ENCODE measurements at regions of chr5 and their contacts with region 1.

Region 1: DNA sequence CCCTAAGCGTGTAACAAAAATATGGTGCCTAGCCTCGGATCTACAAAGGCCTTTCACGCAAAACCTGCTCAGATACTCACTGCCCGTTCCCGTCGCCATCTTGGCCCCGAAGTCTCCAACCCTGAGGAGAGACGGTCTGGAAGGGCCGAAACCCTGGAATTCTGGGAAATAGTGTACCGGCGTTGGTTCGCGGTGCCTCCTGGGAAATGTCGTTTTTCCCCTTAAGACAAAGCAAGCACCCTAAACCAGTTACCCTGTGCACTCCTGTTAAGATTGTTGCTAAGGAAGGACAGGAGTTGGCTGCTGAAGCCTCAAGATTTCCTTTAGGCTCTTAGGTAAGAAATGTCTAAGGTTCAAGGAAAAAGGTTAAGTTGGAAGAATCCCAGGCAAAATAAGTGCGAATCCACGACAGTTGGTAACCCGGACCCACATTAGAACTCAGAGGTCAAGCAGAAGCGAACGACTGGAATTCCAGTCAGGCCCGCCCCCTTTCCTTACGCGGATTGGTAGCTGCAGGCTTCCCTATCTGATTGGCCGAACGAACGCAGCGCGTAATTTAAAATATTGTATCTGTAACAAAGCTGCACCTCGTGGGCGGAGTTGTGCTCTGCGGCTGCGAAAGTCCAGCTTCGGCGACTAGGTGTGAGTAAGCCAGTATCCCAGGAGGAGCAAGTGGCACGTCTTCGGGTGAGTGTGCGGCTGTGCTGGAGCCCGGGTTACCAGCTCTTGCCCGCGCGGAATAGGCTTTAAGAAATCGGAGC is at the starts of genes BRD8 and KIF20A:
- DNase-seq: peak; percentile 92
- ATAC-seq: peak; percentile 92
- H3K4me3 ChIP-seq: peak within 1 kb of the TSS; percentile 97
- H3K27ac ChIP-seq: peak within 1 kb of the TSS; percentile 97
- H3K4me1 ChIP-seq: no peaks in the 10 kb centered on the region; the same call in 1 of the 2 replicates
- H3K27me3 ChIP-seq: no peaks in the 10 kb centered on the region
- CTCF ChIP-seq: no peak
- EP300 ChIP-seq: peak in 1 of 2 experiments; percentile 13; a peak in 2 of 4 replicates
- POLR2A ChIP-seq: peak; percentile 73
- RAD21 ChIP-seq: no peak
- polyA plus RNA-seq, gene BRD8: 35.2 to 52.6 TPM
- polyA plus RNA-seq, gene KIF20A: 20.7 to 27.2 TPM

Region 2: GRCh38 chr5:138213161-138214029 is 34.7 kb after region 1 on chr5 and contains the start of gene CDC23:
- CTCF ChIA-PET with region 1: interaction called, 3 read pairs
- POLR2A ChIA-PET with region 1: interaction called, 9 read pairs
- RAD21 ChIA-PET with region 1: interaction called, 12 read pairs
- SMC1A ChIA-PET with region 1: interaction called, 5 read pairs
- in situ Hi-C with region 1: no loop called
- intact Hi-C with region 1: no loop called
- DNase-seq: peak; percentile 94
- ATAC-seq: peak; percentile 99
- H3K4me3 ChIP-seq: peak within 1 kb of the TSS; percentile 92
- H3K27ac ChIP-seq: peak within 1 kb of the TSS; percentile 66
- H3K4me1 ChIP-seq: no peaks in the 10 kb centered on the region; the same call in 1 of the 2 replicates
- H3K27me3 ChIP-seq: no peaks in the 10 kb centered on the region
- CTCF ChIP-seq: no peak
- EP300 ChIP-seq: no peak
- POLR2A ChIP-seq: peak; percentile 93
- RAD21 ChIP-seq: no peak
- polyA plus RNA-seq, gene CDC23: 45.7 to 61.7 TPM

Region 3: GRCh38 chr5:138337685-138338410 is 159.2 kb after region 1 on chr5 and contains the start of gene FAM53C:
- CTCF ChIA-PET with region 1: no interaction called
- POLR2A ChIA-PET with region 1: interaction called, 6 read pairs
- RAD21 ChIA-PET with region 1: no interaction called
- SMC1A ChIA-PET with region 1: interaction called, 7 read pairs
- in situ Hi-C with region 1: no loop called
- intact Hi-C with region 1: loop called (anchors 5 kb)
- DNase-seq: peak; percentile 79
- ATAC-seq: peak; percentile 94
- H3K4me3 ChIP-seq: peak within 1 kb of the TSS; percentile 90
- H3K27ac ChIP-seq: peak within 1 kb of the TSS; percentile 96
- H3K4me1 ChIP-seq: no peaks in the 10 kb centered on the region
- H3K27me3 ChIP-seq: no peaks in the 10 kb centered on the region
- CTCF ChIP-seq: no peak
- EP300 ChIP-seq: peak; percentile 3 to 58; a peak in 1 of 4 replicates
- POLR2A ChIP-seq: peak; percentile 100
- RAD21 ChIP-seq: no peak
- polyA plus RNA-seq, gene FAM53C: 8.0 to 8.8 TPM

Region 4: GRCh38 chr5:138408023-138408422 is 229.3 kb after region 1 on chr5:
- CTCF ChIA-PET with region 1: interaction called, 4 read pairs
- POLR2A ChIA-PET with region 1: no interaction called
- RAD21 ChIA-PET with region 1: interaction called, 3 read pairs
- SMC1A ChIA-PET with region 1: interaction called, 3 read pairs
- in situ Hi-C with region 1: loop called (anchors 10 kb)
- intact Hi-C with region 1: loop called (anchors 1 kb)
- DNase-seq: peak; percentile 42
- ATAC-seq: peak; percentile 97
- H3K4me3 ChIP-seq: no peak overlapping the region
- H3K27ac ChIP-seq: peak overlapping the region; percentile 52
- H3K4me1 ChIP-seq: peaks cover 6% of the 10 kb centered on the region; the same call in 1 of the 2 replicates
- H3K27me3 ChIP-seq: no peaks in the 10 kb centered on the region
- CTCF ChIP-seq: no peak; a peak in 1 of 6 replicates
- EP300 ChIP-seq: no peak
- POLR2A ChIP-seq: no peak
- RAD21 ChIP-seq: no peak

Region 5: GRCh38 chr5:138449501-138450239 is 271.0 kb after region 1 on chr5:
- CTCF ChIA-PET with region 1: interaction called, 5 read pairs
- POLR2A ChIA-PET with region 1: no interaction called
- RAD21 ChIA-PET with region 1: interaction called, 4 read pairs
- SMC1A ChIA-PET with region 1: no interaction called
- in situ Hi-C with region 1: no loop called
- intact Hi-C with region 1: loop called (anchors 1 kb)
- DNase-seq: no peak
- ATAC-seq: peak; percentile 97
- H3K4me3 ChIP-seq: no peak overlapping the region
- H3K27ac ChIP-seq: no peak overlapping the region
- H3K4me1 ChIP-seq: peaks cover 4% of the 10 kb centered on the region; the same call in 1 of the 2 replicates
- H3K27me3 ChIP-seq: no peaks in the 10 kb centered on the region
- CTCF ChIP-seq: peak; percentile 91 to 96 (median 93)
- EP300 ChIP-seq: no peak
- POLR2A ChIP-seq: no peak
- RAD21 ChIP-seq: peak; percentile 63

Region 6: GRCh38 chr5:138542956-138543729 is 364.4 kb after region 1 on chr5 and contains the start of gene ETF1:
- CTCF ChIA-PET with region 1: interaction called, 3 read pairs
- POLR2A ChIA-PET with region 1: interaction called, 6 read pairs
- RAD21 ChIA-PET with region 1: interaction called, 4 read pairs
- SMC1A ChIA-PET with region 1: interaction called, 6 read pairs
- in situ Hi-C with region 1: no loop called
- intact Hi-C with region 1: loop called (anchors 1 kb)
- DNase-seq: peak; percentile 97
- ATAC-seq: peak; percentile 92
- H3K4me3 ChIP-seq: peak within 1 kb of the TSS; percentile 99
- H3K27ac ChIP-seq: peak within 1 kb of the TSS; percentile 100
- H3K4me1 ChIP-seq: peaks cover 17% of the 10 kb centered on the region
- H3K27me3 ChIP-seq: no peaks in the 10 kb centered on the region
- CTCF ChIP-seq: no peak
- EP300 ChIP-seq: 0 out of 4 replicates have a peak, but pooled peaks have one; percentile 6 to 7
- POLR2A ChIP-seq: peak; percentile 86
- RAD21 ChIP-seq: no peak
- polyA plus RNA-seq, gene ETF1: 29.8 to 44.9 TPM

Measured in GM12878 (cell line).